Astrocyte of the cerebellum (primary cell): ENCODE measurements at regions of chr16 and their contacts with region 1.

Region 1: DNA sequence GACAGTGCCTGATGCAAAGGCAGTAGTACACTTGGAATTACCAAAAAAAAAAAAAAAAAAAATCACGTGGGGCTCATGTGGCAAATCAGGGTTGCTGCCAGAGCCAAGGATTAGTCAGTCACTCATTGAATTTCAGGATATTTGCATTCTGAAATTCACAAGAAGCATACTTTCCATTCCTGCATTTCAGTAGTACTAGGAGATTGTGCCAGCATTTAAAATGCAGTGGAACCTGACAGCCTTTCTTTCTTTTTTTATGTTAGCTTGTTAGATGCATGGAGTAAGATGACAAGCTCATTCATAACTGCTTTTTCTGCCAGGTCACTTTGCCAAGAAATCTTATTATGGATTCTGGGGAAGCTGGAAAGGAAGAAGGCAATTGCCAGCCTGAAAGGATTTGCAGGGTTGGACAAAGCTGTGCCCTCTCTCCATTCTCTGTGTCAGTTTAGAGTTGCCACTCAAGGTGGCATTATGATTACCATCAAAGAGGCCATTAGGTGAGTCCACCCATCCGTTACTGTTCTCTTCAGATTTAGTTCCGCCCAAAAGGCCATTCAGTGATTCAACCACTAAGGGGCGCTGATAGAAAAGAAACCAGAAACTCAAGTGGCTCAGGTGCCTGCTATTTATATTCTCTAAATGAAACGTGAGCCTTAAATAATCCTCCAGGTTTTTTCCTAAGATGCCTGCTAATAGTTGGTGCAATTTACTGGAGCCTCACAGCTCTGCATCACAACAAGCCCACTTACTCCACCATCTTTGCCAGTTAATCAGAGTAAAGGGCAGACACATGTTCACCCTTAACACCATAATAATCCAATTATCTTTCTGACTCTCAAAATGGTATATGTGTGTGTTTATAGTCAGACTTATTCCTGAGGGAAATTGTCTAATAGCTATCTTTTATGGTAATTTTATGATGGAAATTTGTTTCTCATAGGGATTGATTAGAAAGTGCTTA is 59.0 kb downstream of the TANGO6 start:
- DNase-seq: peak; percentile 48
- H3K4me3 ChIP-seq: no peak overlapping the region
- CTCF ChIP-seq: peak; percentile 81

Region 2: DNA sequence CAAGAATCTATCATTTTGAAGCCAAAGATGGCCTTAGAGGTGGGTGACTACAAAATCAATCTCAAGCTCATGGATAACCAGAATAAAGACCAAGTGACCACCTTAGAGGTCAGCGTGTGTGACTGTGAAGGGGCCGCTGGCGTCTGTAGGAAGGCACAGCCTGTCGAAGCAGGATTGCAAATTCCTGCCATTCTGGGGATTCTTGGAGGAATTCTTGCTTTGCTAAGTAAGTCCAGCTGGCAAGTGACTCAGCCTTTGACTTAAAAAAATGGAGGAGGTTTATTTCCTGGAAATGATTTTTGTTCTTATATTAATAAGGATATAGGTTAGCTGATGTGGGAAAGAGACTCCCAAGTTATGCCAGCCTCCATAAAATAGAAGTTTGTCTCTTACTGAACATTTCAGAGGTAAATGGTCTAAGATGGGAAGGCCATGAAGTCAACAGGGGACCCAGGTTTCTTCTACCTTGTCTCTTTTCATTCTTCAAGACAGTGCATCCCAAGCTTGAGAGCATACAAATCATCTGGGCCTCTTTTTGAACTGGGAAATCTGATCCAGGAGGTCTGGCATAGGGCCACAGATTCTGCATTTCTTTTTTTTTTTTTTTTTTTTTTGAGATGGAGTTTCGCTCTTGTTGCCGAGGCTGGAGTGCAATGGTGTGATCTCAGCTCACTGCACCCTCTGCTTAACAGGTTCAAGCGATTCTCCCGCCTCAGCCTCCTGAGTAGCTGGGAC is 78.7 kb before region 1 on chr16:
- in situ Hi-C with region 1: loop called (anchors 5 kb)
- DNase-seq: peak; percentile 57
- H3K4me3 ChIP-seq: no peak overlapping the region
- CTCF ChIP-seq: no peak

Region 3: GRCh38 chr16:69116906-69117305 is 214.6 kb after region 1 on chr16:
- in situ Hi-C with region 1: loop called (anchors 5 kb)
- DNase-seq: no peak
- H3K4me3 ChIP-seq: no peak overlapping the region
- CTCF ChIP-seq: no peak